Activated CD4-positive, alpha-beta memory T cell treated with anti-CD3 and anti-CD28 coated beads, Interleukin-2, amount 10 ng/mL, durations not matched to agents 7 days and 5 days (primary cell): ENCODE measurements at regions of chr17 and their contacts with region 1.

Region 1: GRCh38 chr17:77140166-77140878 is 447 bp upstream of the SEC14L1 start:
- DNase-seq: peak; percentile 100
- H3K4me3 Mint-ChIP-seq: peak overlapping the region; percentile 72
- H3K27ac Mint-ChIP-seq: peak overlapping the region; percentile 95
- H3K4me1 Mint-ChIP-seq: peaks cover 66% of the 10 kb centered on the region
- H3K27me3 Mint-ChIP-seq: no peaks in the 10 kb centered on the region

Region 2: DNA sequence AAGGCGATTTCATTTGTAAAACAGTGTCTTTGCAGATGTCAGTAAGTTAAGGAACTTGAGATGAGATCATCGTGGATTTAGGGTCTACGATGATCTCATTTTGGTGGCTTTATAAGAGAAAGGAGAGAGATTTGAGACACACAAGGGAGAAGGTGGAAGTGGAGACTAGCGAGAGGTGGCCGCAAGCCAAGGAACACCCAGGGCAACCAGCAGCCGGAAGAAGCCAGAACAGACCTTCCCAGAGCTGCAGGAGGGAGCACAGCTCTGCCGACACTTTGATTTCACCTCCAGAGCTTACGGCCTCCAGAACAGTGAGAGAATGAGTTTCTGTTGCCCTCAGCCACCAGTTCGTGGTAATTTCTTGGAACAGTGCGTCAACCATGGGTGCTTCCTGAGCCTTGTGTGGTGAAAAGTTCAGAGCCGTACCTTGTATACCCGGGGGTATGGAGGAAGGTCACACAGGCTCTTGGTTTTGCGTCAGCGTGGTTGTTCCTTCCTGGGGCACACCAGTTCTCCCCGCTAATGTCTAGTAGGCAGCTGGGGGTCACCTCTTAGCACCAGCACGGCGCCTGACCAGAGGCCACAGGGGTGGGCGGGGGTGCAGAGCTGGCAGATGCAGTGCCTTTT is 12.5 kb before region 1 on chr17:
- CTCF ChIA-PET with region 1: interaction called, 19 read pairs
- POLR2A ChIA-PET with region 1: interaction called, 148 read pairs
- DNase-seq: peak; percentile 88
- H3K4me3 Mint-ChIP-seq: peak overlapping the region; percentile 55
- H3K27ac Mint-ChIP-seq: peak overlapping the region; percentile 93
- H3K4me1 Mint-ChIP-seq: peaks cover 55% of the 10 kb centered on the region
- H3K27me3 Mint-ChIP-seq: no peaks in the 10 kb centered on the region

Region 3: GRCh38 chr17:77182205-77183172 is 42.2 kb after region 1 on chr17:
- CTCF ChIA-PET with region 1: interaction called, 7 read pairs
- POLR2A ChIA-PET with region 1: interaction called, 18 read pairs
- DNase-seq: no peak
- H3K4me3 Mint-ChIP-seq: peak overlapping the region; percentile 11
- H3K27ac Mint-ChIP-seq: peak overlapping the region; percentile 78
- H3K4me1 Mint-ChIP-seq: peaks cover 32% of the 10 kb centered on the region
- H3K27me3 Mint-ChIP-seq: no peaks in the 10 kb centered on the region

Region 4: DNA sequence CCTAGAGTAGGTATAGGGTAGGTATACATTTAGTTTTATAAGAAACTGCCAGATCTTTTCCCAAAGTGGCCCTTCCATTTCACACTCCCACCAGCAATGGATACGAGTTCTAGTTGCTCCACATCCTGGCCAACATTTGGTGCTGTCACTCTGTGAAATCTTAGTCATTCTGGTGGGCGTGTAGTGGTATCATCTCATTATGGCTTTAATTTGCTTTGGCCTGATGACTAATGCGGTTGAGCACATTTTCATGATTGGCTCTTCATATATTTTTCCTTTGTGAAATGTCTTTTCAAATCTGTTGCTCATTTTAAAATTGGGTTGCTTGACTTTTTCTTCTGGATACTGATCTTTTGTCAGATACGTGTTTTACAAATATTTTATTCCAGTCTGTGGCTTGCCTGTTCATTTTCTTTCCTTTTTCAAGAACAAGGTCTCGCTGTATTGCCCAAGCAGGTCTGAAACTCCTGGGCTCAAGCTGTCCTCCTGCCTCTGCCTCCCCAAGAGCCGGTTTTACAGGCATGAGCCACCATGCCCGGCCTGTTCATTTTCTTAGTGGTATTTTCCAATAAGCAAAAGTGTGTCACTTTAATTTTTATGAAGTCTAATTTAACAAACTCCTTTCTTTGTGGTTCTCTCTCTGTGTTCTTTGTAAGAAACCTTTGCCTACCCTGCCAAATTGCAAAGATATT is 192.8 kb after region 1 on chr17:
- CTCF ChIA-PET with region 1: no interaction called
- POLR2A ChIA-PET with region 1: no interaction called
- DNase-seq: peak; percentile 38
- H3K4me3 Mint-ChIP-seq: no peak overlapping the region
- H3K27ac Mint-ChIP-seq: peak overlapping the region; percentile 90
- H3K4me1 Mint-ChIP-seq: peaks cover 40% of the 10 kb centered on the region
- H3K27me3 Mint-ChIP-seq: no peaks in the 10 kb centered on the region